ENCODE measurements at regions of chr17 and their contacts with region 1.

Region 1: DNA sequence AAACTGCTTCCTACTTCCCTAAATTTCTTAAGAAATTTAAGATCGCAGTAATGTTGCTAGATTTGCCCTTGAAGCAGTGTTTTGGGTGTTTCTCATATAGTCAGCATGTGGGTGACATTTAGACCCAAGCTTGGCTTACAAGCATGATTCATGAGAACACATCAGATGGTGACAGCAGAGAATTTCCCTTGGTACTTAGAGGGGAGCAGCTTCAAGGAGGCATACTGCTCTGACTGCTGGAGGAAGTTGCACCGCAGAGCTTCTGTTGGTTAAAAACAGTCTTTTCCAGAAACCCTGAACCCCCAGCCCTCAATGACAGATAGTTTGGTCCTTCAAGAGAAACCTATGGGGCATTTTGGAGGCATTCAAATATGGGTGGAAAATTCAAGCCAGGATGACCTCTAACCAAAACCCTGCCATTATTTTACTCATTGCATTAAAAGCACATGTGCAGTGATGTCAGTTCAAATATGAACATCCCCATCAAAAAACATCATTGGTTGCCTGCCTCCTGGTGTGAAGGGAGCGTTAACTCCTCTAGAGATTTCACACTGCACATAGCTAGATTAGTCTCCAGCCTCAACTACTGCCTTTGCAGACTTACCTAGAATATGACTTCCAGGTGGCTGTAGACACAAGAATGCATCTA is 201.5 kb upstream of the CACNG5 start:
- DNase-seq: peak; percentile 47
- ATAC-seq: no peak
- H3K4me3 ChIP-seq: no peak overlapping the region
- H3K27ac ChIP-seq: no peak overlapping the region
- H3K4me1 ChIP-seq: peaks cover 13% of the 10 kb centered on the region
- H3K27me3 ChIP-seq: no peaks in the 10 kb centered on the region
- CTCF ChIP-seq: no peak
- POLR2A ChIP-seq: no peak
- RAD21 ChIP-seq: no peak

Region 2: GRCh38 chr17:66287911-66288310 is 345.5 kb before region 1 on chr17:
- CTCF ChIA-PET with region 1: interaction called, 13 read pairs
- POLR2A ChIA-PET with region 1: no interaction called
- dilution Hi-C with region 1: no loop called
- in situ Hi-C with region 1: no loop called
- intact Hi-C with region 1: no loop called
- DNase-seq: no peak
- ATAC-seq: no peak
- H3K4me3 ChIP-seq: no peak overlapping the region
- H3K27ac ChIP-seq: no peak overlapping the region
- H3K4me1 ChIP-seq: peaks cover 2% of the 10 kb centered on the region; the same call in 1 of the 2 replicates
- H3K27me3 ChIP-seq: no peaks in the 10 kb centered on the region
- CTCF ChIP-seq: no peak
- POLR2A ChIP-seq: no peak
- RAD21 ChIP-seq: no peak

Region 3: GRCh38 chr17:66580184-66580955 is 53.1 kb before region 1 on chr17:
- CTCF ChIA-PET with region 1: no interaction called
- POLR2A ChIA-PET with region 1: no interaction called
- dilution Hi-C with region 1: no loop called
- in situ Hi-C with region 1: no loop called
- intact Hi-C with region 1: loop called (anchors 2 kb)
- DNase-seq: peak; percentile 76
- ATAC-seq: peak; percentile 92
- H3K4me3 ChIP-seq: no peak overlapping the region
- H3K27ac ChIP-seq: peak overlapping the region; percentile 81
- H3K4me1 ChIP-seq: peaks cover 18% of the 10 kb centered on the region
- H3K27me3 ChIP-seq: no peaks in the 10 kb centered on the region
- CTCF ChIP-seq: no peak
- POLR2A ChIP-seq: no peak
- RAD21 ChIP-seq: no peak